Dendritic cell treated with granulocyte-macrophage colony-stimulating factor and Interleukin-4, amounts not matched to agents 40 ng/mL and 50 ng/mL, for 4 days (primary cell): ENCODE measurements at regions of chr22 and their contacts with region 1.

Region 1: DNA sequence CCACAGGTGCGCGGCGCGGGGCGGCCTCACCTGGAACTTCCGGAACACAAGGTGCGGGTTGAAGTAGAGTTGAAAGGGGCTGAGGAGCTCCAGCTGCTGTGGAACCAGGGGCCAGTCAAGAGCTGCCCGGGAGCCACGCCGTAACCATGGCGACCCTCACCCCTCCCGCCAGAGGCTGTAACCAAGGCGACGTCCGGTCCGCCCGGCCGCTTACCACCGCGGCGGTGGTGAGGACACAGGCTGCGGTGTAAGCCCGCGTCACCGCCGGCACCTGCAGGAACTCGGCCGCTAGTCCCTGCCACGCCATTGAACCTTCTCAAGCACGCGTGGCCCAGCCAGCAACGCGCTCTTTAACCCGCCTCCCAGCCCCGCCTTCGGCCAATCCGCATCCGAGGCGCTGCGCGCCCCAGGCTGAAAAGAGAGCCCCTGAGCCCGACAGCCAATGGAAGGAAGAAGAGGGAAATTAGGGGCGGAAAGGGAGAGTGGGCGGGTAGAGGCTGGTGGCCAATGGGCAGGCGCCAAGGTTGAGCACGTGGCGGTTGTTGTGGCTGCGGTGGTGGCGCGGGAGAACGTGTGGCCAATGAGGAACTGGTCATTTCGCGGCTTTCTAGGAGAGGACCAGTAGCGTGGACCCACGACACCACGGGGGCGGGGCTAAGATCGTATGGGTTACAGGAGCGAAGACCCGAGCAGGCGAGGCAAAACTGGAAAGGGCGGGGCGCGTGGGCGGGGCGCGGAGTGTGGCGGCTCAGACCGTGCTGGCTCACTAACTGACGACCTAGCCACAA is at the start of gene DERL3:
- H3K4me3 Mint-ChIP-seq: peak within 1 kb of the TSS; percentile 89
- H3K27ac Mint-ChIP-seq: peak within 1 kb of the TSS; percentile 83
- H3K4me1 Mint-ChIP-seq: peaks cover 26% of the 10 kb centered on the region
- H3K27me3 Mint-ChIP-seq: peaks cover 5% of the 10 kb centered on the region

Region 2: GRCh38 chr22:23786752-23787599 is 51.9 kb before region 1 on chr22 and contains the start of gene SMARCB1:
- intact Hi-C with region 1: loop called (anchors 5 kb)
- H3K4me3 Mint-ChIP-seq: peak within 1 kb of the TSS; percentile 77
- H3K27ac Mint-ChIP-seq: peak within 1 kb of the TSS; percentile 89
- H3K4me1 Mint-ChIP-seq: peaks cover 21% of the 10 kb centered on the region
- H3K27me3 Mint-ChIP-seq: peaks cover 4% of the 10 kb centered on the region

Region 3: DNA sequence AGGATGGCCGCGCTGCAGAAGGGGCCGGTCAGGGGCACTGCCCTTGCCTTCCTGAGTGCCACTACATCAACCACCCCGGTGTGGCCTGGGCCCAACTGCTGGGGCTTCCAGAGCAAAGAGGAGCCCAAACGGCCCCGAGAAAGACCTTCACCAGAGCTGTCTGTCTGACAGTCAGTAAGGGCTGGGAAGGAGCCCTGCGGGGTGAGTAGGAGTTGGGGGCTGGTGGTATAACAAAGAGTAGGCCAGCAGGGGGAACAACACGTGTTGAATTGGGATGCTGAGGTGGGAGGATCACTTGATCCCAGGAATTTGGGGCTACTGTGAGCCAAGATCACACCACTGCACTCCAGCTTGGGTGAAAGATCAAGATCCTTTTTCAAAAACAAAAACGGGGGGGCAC is 162.4 kb after region 1 on chr22:
- intact Hi-C with region 1: no loop called
- H3K4me3 Mint-ChIP-seq: no peak overlapping the region
- H3K27ac Mint-ChIP-seq: peak overlapping the region; percentile 16
- H3K4me1 Mint-ChIP-seq: peaks cover 60% of the 10 kb centered on the region
- H3K27me3 Mint-ChIP-seq: peaks cover 11% of the 10 kb centered on the region